CD8-positive, alpha-beta T cell (primary cell): ENCODE measurements at regions of chr3 and their contacts with region 1.

Region 1: GRCh38 chr3:106880206-106880605 is 497.0 kb upstream of the CCDC54 start:
- DNase-seq: no peak
- ATAC-seq: no peak
- H3K4me3 ChIP-seq: no peak overlapping the region
- H3K4me3 Mint-ChIP-seq: no peak overlapping the region
- H3K27ac ChIP-seq: no peak overlapping the region
- H3K27ac Mint-ChIP-seq: no peak overlapping the region
- H3K4me1 ChIP-seq: no peaks in the 10 kb centered on the region
- H3K4me1 Mint-ChIP-seq: no peaks in the 10 kb centered on the region
- H3K27me3 ChIP-seq: no peaks in the 10 kb centered on the region
- H3K27me3 Mint-ChIP-seq: peaks cover 1% of the 10 kb centered on the region
- CTCF ChIP-seq: no peak

Region 2: DNA sequence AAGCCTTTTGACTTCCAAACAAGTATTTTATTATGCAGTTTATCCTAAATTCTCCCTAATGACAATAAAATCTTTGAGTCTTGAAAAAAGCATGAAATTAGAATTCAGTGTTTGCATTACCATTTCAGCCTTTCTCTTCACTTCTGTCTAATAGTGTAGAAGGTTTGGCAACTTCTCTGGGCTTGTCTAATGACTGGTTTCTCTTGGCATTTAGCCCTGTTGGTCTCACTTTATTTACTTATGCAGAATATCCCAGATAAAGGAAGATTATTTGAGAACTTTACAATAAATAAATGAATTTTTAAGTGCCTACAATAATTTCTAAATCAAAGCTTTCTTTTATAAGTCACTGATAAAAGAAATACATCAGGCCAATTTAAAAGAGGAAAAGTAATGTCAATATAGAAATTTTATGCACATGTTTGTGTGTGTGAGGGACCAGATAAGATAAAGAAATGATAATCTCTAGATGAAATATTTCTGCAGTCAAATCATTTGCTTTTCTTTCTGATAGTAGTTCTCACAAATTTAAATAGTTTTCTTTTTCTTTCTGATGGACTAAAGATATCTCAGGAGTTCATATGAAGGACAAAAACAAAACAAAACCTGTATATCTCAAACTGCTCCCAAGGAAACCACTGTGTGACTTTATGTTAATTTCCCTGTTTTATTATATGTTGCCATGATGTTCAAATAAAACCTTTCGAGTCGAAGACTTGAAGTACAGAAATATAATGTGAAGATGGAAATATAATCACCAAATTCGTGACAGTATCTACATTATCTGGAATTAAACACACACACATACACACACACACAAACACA is 478.3 kb before region 1 on chr3:
- CTCF ChIA-PET with region 1: no interaction called
- POLR2A ChIA-PET with region 1: no interaction called
- intact Hi-C with region 1: loop called in 1 of 2 experiments (anchors 5 kb)
- DNase-seq: no peak
- ATAC-seq: no peak
- H3K4me3 ChIP-seq: no peak overlapping the region
- H3K4me3 Mint-ChIP-seq: no peak overlapping the region
- H3K27ac ChIP-seq: no peak overlapping the region
- H3K27ac Mint-ChIP-seq: no peak overlapping the region
- H3K4me1 ChIP-seq: no peaks in the 10 kb centered on the region
- H3K4me1 Mint-ChIP-seq: no peaks in the 10 kb centered on the region
- H3K27me3 ChIP-seq: no peaks in the 10 kb centered on the region
- H3K27me3 Mint-ChIP-seq: no peaks in the 10 kb centered on the region
- CTCF ChIP-seq: no peak

Region 3: DNA sequence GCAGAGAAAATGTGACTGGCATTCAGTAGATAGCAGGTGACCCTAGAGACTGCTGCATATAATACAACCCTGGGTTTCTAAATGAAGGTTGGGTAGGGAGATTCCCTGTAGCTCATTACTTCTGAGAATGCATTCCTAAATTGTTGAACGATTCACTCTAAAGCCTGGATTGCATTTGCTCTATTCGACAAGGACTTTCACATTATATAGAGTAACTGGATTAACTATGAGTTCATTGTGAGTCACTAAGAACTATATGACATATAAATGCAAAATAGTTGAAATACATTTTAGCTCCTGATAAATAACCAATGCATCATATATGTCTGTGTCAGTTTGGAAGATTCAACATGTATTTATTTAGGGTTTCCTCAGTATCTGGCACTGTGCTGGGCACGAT is 202.3 kb after region 1 on chr3:
- CTCF ChIA-PET with region 1: no interaction called
- POLR2A ChIA-PET with region 1: no interaction called
- intact Hi-C with region 1: no loop called
- DNase-seq: no peak
- ATAC-seq: no peak
- H3K4me3 ChIP-seq: no peak overlapping the region
- H3K4me3 Mint-ChIP-seq: no peak overlapping the region
- H3K27ac ChIP-seq: no peak overlapping the region
- H3K27ac Mint-ChIP-seq: no peak overlapping the region
- H3K4me1 ChIP-seq: no peaks in the 10 kb centered on the region
- H3K4me1 Mint-ChIP-seq: no peaks in the 10 kb centered on the region
- H3K27me3 ChIP-seq: no peaks in the 10 kb centered on the region
- H3K27me3 Mint-ChIP-seq: no peaks in the 10 kb centered on the region
- CTCF ChIP-seq: no peak

Region 4: GRCh38 chr3:107522510-107523288 is 642.5 kb after region 1 on chr3 and contains the start of gene BBX:
- CTCF ChIA-PET with region 1: no interaction called
- POLR2A ChIA-PET with region 1: no interaction called
- intact Hi-C with region 1: no loop called
- DNase-seq: peak; percentile 83 to 98 (median 91)
- ATAC-seq: peak; percentile 91
- H3K4me3 ChIP-seq: peak within 1 kb of the TSS; percentile 77 to 86
- H3K4me3 Mint-ChIP-seq: peak within 1 kb of the TSS; percentile 99
- H3K27ac ChIP-seq: peak within 1 kb of the TSS; percentile 47 to 69
- H3K27ac Mint-ChIP-seq: peak within 1 kb of the TSS; percentile 99
- H3K4me1 ChIP-seq: peaks cover 19% of the 10 kb centered on the region
- H3K4me1 Mint-ChIP-seq: peaks cover 32% of the 10 kb centered on the region
- H3K27me3 ChIP-seq: no peaks in the 10 kb centered on the region
- H3K27me3 Mint-ChIP-seq: no peaks in the 10 kb centered on the region
- CTCF ChIP-seq: no peak
- total RNA-seq, gene BBX: 71.3 to 77.9 TPM